ENCODE measurements at regions of chr12 and their contacts with region 1.

Region 1: GRCh38 chr12:56468216-56469006 is at the start of gene SPRYD4:
- DNase-seq: peak; percentile 87 to 91
- ATAC-seq: peak; percentile 91 to 95
- H3K4me3 ChIP-seq: peak within 1 kb of the TSS; percentile 82 to 96 (median 89)
- H3K27ac ChIP-seq: peak within 1 kb of the TSS; percentile 88 to 94 (median 92)
- H3K4me1 ChIP-seq: peaks cover 11 to 13% of the 10 kb centered on the region in 2 donors
- H3K27me3 ChIP-seq: no peaks in the 10 kb centered on the region
- CTCF ChIP-seq: peak in 3 of 5 experiments; percentile 35 to 39 (median 35)
- POLR2A ChIP-seq: peak; percentile 82 to 85
- total RNA-seq, gene SPRYD4: 1.6 to 4.7 (median 2.9) TPM

Region 2: GRCh38 chr12:56315622-56316473 is 152.6 kb before region 1 on chr12 and contains the start of gene CNPY2:
- in situ Hi-C with region 1: no loop called
- intact Hi-C with region 1: loop called (anchors 5 kb)
- DNase-seq: peak; percentile 93 to 96
- ATAC-seq: peak; percentile 95 to 98
- H3K4me3 ChIP-seq: peak within 1 kb of the TSS; percentile 91 to 99 (median 98)
- H3K27ac ChIP-seq: peak within 1 kb of the TSS; percentile 96 to 99 (median 96)
- H3K4me1 ChIP-seq: peaks cover 19 to 20% of the 10 kb centered on the region in 2 donors
- H3K27me3 ChIP-seq: no peaks in the 10 kb centered on the region
- CTCF ChIP-seq: peak in 2 of 5 experiments; percentile 28 to 29
- POLR2A ChIP-seq: peak; percentile 84 to 88
- total RNA-seq, gene CNPY2: 21.7 to 59.1 (median 28.4) TPM

Region 3: DNA sequence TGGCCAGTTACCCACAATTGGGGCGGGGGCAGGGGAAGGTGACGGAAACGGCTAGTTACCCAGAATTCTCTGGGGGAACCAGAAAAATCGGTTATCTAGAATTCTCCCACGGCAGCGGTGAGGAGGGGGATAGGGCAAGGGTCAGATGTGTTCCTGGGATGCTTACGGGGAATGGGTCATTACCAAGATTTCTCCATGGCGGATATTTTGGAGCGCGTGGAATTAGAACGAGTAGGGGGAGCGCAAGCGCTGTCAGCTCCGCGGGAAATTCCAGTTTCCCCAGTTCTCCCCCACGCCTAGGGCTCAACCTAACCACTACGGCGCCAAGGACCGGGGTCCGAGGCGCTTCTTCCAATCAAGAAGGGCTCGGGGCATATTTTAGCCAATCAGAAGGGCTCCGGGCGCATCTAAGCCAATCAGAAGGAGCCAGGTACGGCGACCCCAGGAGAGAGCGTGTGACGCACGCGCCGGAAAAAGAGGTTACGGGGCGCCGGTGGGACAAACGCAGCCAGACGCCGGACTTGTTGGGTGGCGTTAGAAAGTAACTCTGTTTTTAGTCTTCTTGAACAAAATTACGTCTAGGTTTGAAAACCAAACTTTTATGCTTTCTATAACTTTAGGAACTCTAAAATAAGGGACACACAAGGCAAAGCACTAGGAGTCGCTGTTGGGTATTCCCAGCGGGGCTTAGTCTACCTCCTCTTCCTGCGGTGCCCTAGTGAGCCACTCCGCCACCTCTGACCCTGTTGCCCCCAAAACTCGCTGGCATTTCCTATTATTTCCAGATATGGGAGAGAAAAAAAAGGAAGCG is 134.5 kb before region 1 on chr12 and contains the start of gene PAN2:
- in situ Hi-C with region 1: no loop called
- intact Hi-C with region 1: loop called (anchors 5 kb)
- DNase-seq: peak; percentile 95 to 97
- ATAC-seq: peak; percentile 98 to 99
- H3K4me3 ChIP-seq: peak within 1 kb of the TSS; percentile 53 to 81 (median 78)
- H3K27ac ChIP-seq: peak within 1 kb of the TSS; percentile 76 to 95 (median 92)
- H3K4me1 ChIP-seq: peaks cover 9 to 14% of the 10 kb centered on the region in 2 donors
- H3K27me3 ChIP-seq: no peaks in the 10 kb centered on the region
- CTCF ChIP-seq: peak; percentile 30 to 46 (median 43)
- POLR2A ChIP-seq: peak; percentile 88 to 89
- total RNA-seq, gene PAN2: 7.8 to 33.0 (median 11.6) TPM

Region 4: GRCh38 chr12:56359851-56360767 is 108.3 kb before region 1 on chr12 and contains the start of gene STAT2:
- in situ Hi-C with region 1: loop called in 2 of 4 experiments (anchors 10 kb)
- intact Hi-C with region 1: loop called (anchors 1 kb)
- DNase-seq: peak; percentile 98
- ATAC-seq: peak; percentile 99 to 100
- H3K4me3 ChIP-seq: peak within 1 kb of the TSS; percentile 73 to 85 (median 82)
- H3K27ac ChIP-seq: peak within 1 kb of the TSS; percentile 86 to 92 (median 87)
- H3K4me1 ChIP-seq: peaks cover 8 to 12% of the 10 kb centered on the region in 2 donors
- H3K27me3 ChIP-seq: no peaks in the 10 kb centered on the region
- CTCF ChIP-seq: peak in 2 of 5 experiments; percentile 7 to 12
- POLR2A ChIP-seq: peak; percentile 63 to 69
- total RNA-seq, gene STAT2: 21.0 to 33.2 (median 27.4) TPM

Region 5: DNA sequence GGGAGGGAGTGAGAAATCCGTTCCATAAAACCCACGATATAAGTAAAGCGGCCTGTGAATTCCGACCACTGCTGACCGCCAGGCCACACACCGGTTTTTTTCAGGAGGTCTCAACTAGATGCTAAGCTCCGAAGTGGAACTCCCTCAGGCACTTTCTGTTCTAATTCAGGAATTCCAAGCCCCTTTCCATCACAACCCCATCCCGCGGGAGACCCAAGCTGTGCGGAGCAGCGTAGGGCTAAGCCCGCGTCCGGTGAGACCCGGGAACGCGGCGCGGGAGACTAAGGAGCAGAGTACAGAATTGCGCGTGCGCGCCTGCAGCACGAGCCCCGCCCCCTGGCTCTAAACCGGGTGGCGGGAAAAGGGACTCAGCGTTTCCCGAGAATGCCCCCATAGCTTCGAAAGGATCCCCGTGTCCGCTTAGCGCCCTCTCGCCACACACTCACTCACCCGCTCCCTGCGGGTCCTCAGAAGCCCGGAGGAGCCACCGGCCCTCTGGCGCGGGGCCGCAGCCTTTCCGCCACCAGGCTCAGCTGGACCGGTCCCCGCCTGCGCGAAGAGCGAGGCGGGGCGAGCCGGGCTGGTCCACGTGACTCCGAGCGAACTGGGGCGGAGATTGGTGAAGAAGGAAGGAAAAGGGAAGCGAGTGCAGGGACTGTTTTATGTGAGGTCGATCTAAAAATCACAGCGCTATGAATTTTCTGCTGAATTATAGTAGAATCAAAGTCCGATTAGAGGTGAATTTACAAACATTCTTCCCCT is 19.4 kb before region 1 on chr12 and contains the start of gene TIMELESS:
- in situ Hi-C with region 1: no loop called
- intact Hi-C with region 1: loop called (anchors 1 kb)
- DNase-seq: peak; percentile 77 to 85
- ATAC-seq: peak; percentile 98 to 99
- H3K4me3 ChIP-seq: peak within 1 kb of the TSS; percentile 75 to 83 (median 82)
- H3K27ac ChIP-seq: peak within 1 kb of the TSS; percentile 84 to 92 (median 88)
- H3K4me1 ChIP-seq: peaks cover 6 to 8% of the 10 kb centered on the region in 2 donors
- H3K27me3 ChIP-seq: no peaks in the 10 kb centered on the region
- CTCF ChIP-seq: peak in 2 of 5 experiments; percentile 15 to 25
- POLR2A ChIP-seq: peak; percentile 47 to 57
- total RNA-seq, gene TIMELESS: 1.9 to 4.6 (median 2.5) TPM

Region 6: DNA sequence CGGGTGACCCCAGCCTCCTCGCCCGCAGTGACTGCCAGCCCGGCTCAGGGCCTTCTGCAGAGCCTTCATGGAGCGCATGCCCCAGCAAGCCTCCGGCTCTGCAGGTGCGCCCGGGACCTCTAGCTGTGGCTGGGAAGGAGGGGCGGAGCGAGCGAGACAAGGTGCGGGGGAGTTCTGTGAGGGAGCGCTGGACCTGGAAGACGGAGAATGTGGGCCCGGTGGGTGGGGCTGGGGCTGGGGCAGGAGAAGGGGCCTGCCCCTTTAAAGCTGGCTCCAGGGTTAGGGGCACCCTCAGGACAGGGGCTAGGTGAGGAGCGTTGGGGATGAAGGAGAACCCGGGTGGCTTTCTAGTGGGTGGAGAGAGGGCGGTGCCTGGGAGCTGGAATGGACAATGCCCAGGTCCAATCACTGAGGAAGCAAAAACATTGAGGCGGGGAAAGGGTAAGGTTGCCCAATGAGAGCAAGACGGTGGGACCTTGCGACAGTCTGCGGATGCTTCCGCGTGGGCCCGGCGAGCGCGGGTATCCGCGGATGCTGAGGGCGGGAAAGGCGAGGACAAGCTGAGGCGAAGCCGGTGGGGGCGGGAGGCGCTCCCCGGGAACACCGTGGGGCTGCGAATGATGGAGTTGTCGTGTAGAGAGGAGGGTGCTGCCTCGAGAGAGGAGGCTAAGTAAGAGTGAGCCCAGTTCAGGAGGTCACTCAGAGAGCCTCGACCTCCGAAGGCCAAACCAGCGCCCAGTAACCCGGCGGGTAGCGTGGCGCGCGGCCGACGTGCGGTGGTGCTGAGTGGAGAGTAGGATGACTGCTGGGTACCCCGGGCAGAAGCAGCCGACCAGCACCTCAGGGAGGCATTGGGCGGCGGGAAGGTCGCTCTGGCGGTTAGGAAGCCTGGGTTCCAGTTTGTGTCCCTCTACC is 19.9 kb after region 1 on chr12 and contains the start of gene GLS2:
- in situ Hi-C with region 1: no loop called
- intact Hi-C with region 1: no loop called
- DNase-seq: peak; percentile 41 to 66
- ATAC-seq: peak; percentile 96 to 98
- H3K4me3 ChIP-seq: peak within 1 kb of the TSS; percentile 62 to 74 (median 69)
- H3K27ac ChIP-seq: no peak within 1 kb of the TSS
- H3K4me1 ChIP-seq: peaks cover 5 to 18% of the 10 kb centered on the region in 2 donors
- H3K27me3 ChIP-seq: peaks cover 16 to 34% (median 28%) of the 10 kb centered on the region in 3 donors
- CTCF ChIP-seq: no peak
- POLR2A ChIP-seq: no peak
- total RNA-seq, gene GLS2: 0.53 to 1.9 TPM in 2 of 4 donors, not detected in the others

Measured in gastrocnemius medialis (tissue), 4 donors.